ENCODE measurements at regions of chr2 and their contacts with region 1.

Region 1: DNA sequence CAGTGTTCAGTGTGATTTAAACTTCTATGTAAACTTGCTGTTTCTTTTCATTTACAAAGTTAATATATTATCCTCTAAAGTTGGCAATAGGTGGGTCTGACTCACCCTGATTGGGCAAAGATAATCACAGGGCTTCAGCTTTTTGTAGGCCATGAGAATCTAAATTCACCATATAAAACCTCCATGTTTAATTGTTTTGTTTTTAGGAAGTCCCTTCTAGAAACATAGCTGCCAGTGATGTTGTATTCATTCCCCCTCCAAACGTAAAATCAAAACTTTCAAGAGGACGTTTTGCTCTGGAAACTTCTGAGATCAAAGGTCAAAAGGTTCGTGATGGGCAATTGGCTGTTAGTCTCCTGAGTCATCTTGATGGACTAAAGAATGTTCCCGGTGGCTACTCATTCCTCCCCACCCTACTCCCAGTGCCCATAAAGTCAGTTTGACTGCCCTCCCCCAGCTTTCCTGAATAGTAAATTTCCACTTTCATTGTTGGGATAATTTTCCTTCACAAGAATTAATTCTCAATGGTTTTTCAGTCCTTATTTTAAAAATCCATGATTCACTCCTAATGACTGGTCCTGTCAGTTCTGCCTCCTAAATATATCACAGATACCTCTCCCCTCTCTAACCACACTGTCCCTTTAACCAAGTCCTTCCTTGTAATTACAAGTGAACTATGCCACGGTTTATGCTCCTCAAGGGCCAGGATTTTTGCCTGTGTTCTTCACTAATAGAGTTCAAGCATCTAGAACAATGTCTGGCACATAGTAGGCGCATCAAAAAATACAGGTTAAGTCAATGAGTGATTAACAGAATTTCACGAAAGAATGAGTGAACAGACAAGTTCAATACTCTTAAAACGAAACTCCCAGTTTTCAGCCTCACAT is 164.4 kb upstream of the VRK2 start:
- DNase-seq: no peak
- ATAC-seq: peak; percentile 11
- H3K4me3 ChIP-seq: peak overlapping the region; percentile 47; the same call in 1 of the 2 replicates
- H3K27ac ChIP-seq: peak overlapping the region; percentile 74
- H3K4me1 ChIP-seq: peaks cover 39% of the 10 kb centered on the region
- H3K27me3 ChIP-seq: no peaks in the 10 kb centered on the region
- CTCF ChIP-seq: no peak
- EP300 ChIP-seq: no peak
- POLR2A ChIP-seq: no peak
- RAD21 ChIP-seq: no peak

Region 2: GRCh38 chr2:57711991-57712390 is 170.2 kb before region 1 on chr2:
- CTCF ChIA-PET with region 1: no interaction called
- POLR2A ChIA-PET with region 1: no interaction called
- RAD21 ChIA-PET with region 1: no interaction called
- SMC1A ChIA-PET with region 1: no interaction called
- in situ Hi-C with region 1: no loop called
- intact Hi-C with region 1: no loop called
- DNase-seq: no peak
- ATAC-seq: no peak
- H3K4me3 ChIP-seq: no peak overlapping the region
- H3K27ac ChIP-seq: no peak overlapping the region
- H3K4me1 ChIP-seq: no peaks in the 10 kb centered on the region
- H3K27me3 ChIP-seq: no peaks in the 10 kb centered on the region
- CTCF ChIP-seq: no peak
- EP300 ChIP-seq: no peak
- POLR2A ChIP-seq: no peak
- RAD21 ChIP-seq: no peak

Region 3: GRCh38 chr2:57809230-57809629 is 73.0 kb before region 1 on chr2:
- CTCF ChIA-PET with region 1: interaction called, 12 read pairs
- POLR2A ChIA-PET with region 1: interaction called, 4 read pairs
- RAD21 ChIA-PET with region 1: interaction called, 19 read pairs
- SMC1A ChIA-PET with region 1: interaction called, 33 read pairs
- in situ Hi-C with region 1: no loop called
- intact Hi-C with region 1: loop called (anchors 5 kb)
- DNase-seq: peak; percentile 37
- ATAC-seq: peak; percentile 92
- H3K4me3 ChIP-seq: no peak overlapping the region
- H3K27ac ChIP-seq: peak overlapping the region; percentile 62
- H3K4me1 ChIP-seq: peaks cover 8% of the 10 kb centered on the region; the same call in 1 of the 2 replicates
- H3K27me3 ChIP-seq: no peaks in the 10 kb centered on the region
- CTCF ChIP-seq: no peak
- EP300 ChIP-seq: no peak
- POLR2A ChIP-seq: no peak
- RAD21 ChIP-seq: no peak

Region 4: GRCh38 chr2:57869758-57870344 is 12.4 kb before region 1 on chr2:
- CTCF ChIA-PET with region 1: interaction called, 7 read pairs
- POLR2A ChIA-PET with region 1: interaction called, 7 read pairs
- RAD21 ChIA-PET with region 1: interaction called, 9 read pairs
- SMC1A ChIA-PET with region 1: interaction called, 13 read pairs
- in situ Hi-C with region 1: no loop called
- intact Hi-C with region 1: no loop called
- DNase-seq: no peak
- ATAC-seq: no peak
- H3K4me3 ChIP-seq: no peak overlapping the region
- H3K27ac ChIP-seq: no peak overlapping the region
- H3K4me1 ChIP-seq: no peaks in the 10 kb centered on the region
- H3K27me3 ChIP-seq: no peaks in the 10 kb centered on the region
- CTCF ChIP-seq: no peak
- EP300 ChIP-seq: no peak
- POLR2A ChIP-seq: no peak
- RAD21 ChIP-seq: no peak

Region 5: GRCh38 chr2:57897920-57898319 is 15.7 kb after region 1 on chr2:
- CTCF ChIA-PET with region 1: interaction called, 32 read pairs
- POLR2A ChIA-PET with region 1: interaction called, 24 read pairs
- RAD21 ChIA-PET with region 1: interaction called, 74 read pairs
- SMC1A ChIA-PET with region 1: interaction called, 88 read pairs
- in situ Hi-C with region 1: no loop called
- intact Hi-C with region 1: loop called (anchors 1 kb)
- DNase-seq: no peak
- ATAC-seq: no peak
- H3K4me3 ChIP-seq: no peak overlapping the region
- H3K27ac ChIP-seq: no peak overlapping the region
- H3K4me1 ChIP-seq: peaks cover 14% of the 10 kb centered on the region; the same call in 1 of the 2 replicates
- H3K27me3 ChIP-seq: no peaks in the 10 kb centered on the region
- CTCF ChIP-seq: no peak
- EP300 ChIP-seq: no peak
- POLR2A ChIP-seq: no peak
- RAD21 ChIP-seq: no peak

Region 6: DNA sequence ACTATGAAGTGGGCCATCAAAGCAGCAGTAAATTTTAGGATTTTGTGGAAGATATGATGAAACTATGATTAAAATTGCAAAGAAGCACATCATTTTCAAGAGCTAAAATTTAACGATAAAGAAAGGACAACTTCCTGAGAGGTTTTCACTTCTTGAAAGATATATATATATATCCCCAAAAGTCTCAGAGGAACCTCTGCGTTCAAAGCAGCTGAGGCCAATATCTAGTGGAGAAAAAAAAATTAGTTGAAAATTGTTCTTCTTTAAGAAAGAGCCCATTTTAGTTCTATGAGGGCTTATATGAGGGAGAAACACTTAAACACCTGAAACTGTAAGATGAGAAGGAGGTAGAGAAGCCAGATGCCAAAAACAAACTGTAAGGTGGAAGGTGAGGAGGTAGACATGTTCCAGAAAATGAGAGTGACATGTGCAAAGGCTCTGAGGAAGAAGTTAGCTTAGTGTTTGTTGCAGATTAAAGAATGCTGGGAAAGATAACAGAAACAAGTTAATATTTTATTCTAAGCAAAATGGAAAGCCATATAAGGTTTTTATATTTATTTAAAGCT is 91.5 kb after region 1 on chr2:
- CTCF ChIA-PET with region 1: no interaction called
- POLR2A ChIA-PET with region 1: no interaction called
- RAD21 ChIA-PET with region 1: no interaction called
- SMC1A ChIA-PET with region 1: no interaction called
- in situ Hi-C with region 1: no loop called
- intact Hi-C with region 1: no loop called
- DNase-seq: no peak
- ATAC-seq: peak; percentile 22; the same call in 2 of the 3 replicates
- H3K4me3 ChIP-seq: no peak overlapping the region
- H3K27ac ChIP-seq: no peak overlapping the region
- H3K4me1 ChIP-seq: no peaks in the 10 kb centered on the region
- H3K27me3 ChIP-seq: no peaks in the 10 kb centered on the region
- CTCF ChIP-seq: no peak
- EP300 ChIP-seq: no peak
- POLR2A ChIP-seq: no peak
- RAD21 ChIP-seq: no peak

Region 7: DNA sequence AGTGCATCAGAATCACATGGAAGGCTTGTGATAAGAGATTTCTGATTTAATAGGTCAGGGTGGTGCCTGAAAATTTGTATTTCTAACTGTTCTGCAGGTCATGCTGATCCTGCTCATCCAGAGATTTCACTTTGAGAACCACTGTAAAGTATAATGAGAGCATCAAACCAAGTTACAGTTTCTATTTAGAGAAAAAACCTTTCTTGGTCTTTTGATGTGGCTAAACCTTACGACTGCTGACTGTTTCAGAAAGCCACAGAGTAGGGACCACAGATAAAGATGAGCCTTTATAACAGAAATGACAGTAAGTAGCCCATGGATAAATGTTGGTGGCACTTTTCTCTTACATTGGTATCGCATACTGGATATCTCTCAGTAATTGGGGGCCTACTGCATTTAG is 468.2 kb after region 1 on chr2:
- CTCF ChIA-PET with region 1: no interaction called
- POLR2A ChIA-PET with region 1: no interaction called
- RAD21 ChIA-PET with region 1: no interaction called
- SMC1A ChIA-PET with region 1: no interaction called
- in situ Hi-C with region 1: no loop called
- intact Hi-C with region 1: loop called (anchors 5 kb)
- DNase-seq: peak; percentile 21
- ATAC-seq: peak; percentile 97
- H3K4me3 ChIP-seq: no peak overlapping the region
- H3K27ac ChIP-seq: no peak overlapping the region
- H3K4me1 ChIP-seq: no peaks in the 10 kb centered on the region
- H3K27me3 ChIP-seq: peaks cover 0 to 3% of the 10 kb centered on the region in 2 experiments; a peak in 1 of 4 replicates
- CTCF ChIP-seq: no peak
- EP300 ChIP-seq: peak; percentile 58 to 61; a peak in 3 of 4 replicates
- POLR2A ChIP-seq: no peak
- RAD21 ChIP-seq: no peak

Measured in GM12878 (cell line).